Caco-2 (cell line): ENCODE measurements at regions of chr3 and their contacts with region 1.

Region 1: GRCh38 chr3:167209021-167209420 is 171.1 kb downstream of the ZBBX start:
- DNase-seq: peak in 1 of 2 experiments; percentile 16
- H3K4me3 ChIP-seq: no peak overlapping the region
- H3K4me3 Mint-ChIP-seq: no peak overlapping the region
- H3K27ac Mint-ChIP-seq: no peak overlapping the region
- H3K4me1 ChIP-seq: no peaks in the 10 kb centered on the region
- H3K4me1 Mint-ChIP-seq: no peaks in the 10 kb centered on the region
- H3K27me3 ChIP-seq: no peaks in the 10 kb centered on the region
- H3K27me3 Mint-ChIP-seq: peaks cover 3% of the 10 kb centered on the region
- CTCF ChIP-seq: peak in 1 of 2 experiments; percentile 9

Region 2: GRCh38 chr3:167102071-167102470 is 107.0 kb before region 1 on chr3:
- CTCF ChIA-PET with region 1: no interaction called
- POLR2A ChIA-PET with region 1: no interaction called
- intact Hi-C with region 1: loop called (anchors 1 kb)
- DNase-seq: no peak
- H3K4me3 ChIP-seq: no peak overlapping the region
- H3K4me3 Mint-ChIP-seq: no peak overlapping the region
- H3K27ac Mint-ChIP-seq: no peak overlapping the region
- H3K4me1 ChIP-seq: no peaks in the 10 kb centered on the region
- H3K4me1 Mint-ChIP-seq: no peaks in the 10 kb centered on the region
- H3K27me3 ChIP-seq: no peaks in the 10 kb centered on the region
- H3K27me3 Mint-ChIP-seq: no peaks in the 10 kb centered on the region
- CTCF ChIP-seq: peak in 1 of 2 experiments; percentile 25

Region 3: GRCh38 chr3:167750272-167750971 is 541.4 kb after region 1 on chr3:
- CTCF ChIA-PET with region 1: no interaction called
- POLR2A ChIA-PET with region 1: no interaction called
- intact Hi-C with region 1: no loop called
- DNase-seq: no peak
- H3K4me3 ChIP-seq: no peak overlapping the region
- H3K4me3 Mint-ChIP-seq: no peak overlapping the region
- H3K27ac Mint-ChIP-seq: no peak overlapping the region
- H3K4me1 ChIP-seq: no peaks in the 10 kb centered on the region
- H3K4me1 Mint-ChIP-seq: peaks cover 7% of the 10 kb centered on the region
- H3K27me3 ChIP-seq: no peaks in the 10 kb centered on the region
- H3K27me3 Mint-ChIP-seq: no peaks in the 10 kb centered on the region
- CTCF ChIP-seq: no peak